Ascending aorta (tissue), 2 donors: ENCODE measurements at regions of chr5 and their contacts with region 1.

Region 1: DNA sequence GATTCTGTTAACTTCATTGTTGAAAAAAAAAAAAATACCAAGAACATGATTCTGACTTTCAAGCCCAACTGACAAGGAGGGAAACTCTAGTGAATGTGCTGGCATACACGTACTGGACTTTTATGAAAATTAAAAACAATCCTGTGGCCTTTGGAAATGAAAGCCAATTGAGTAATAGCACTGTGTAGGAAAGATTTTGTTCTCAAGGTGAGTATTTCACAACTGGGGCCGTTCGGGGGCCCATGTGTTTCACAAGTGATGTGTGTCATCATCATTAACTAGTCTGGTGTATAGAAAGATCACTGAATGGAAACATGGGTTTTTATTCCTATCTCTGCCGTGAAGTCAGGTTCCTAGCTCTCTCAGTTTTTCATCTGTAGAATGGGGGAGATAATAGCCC is 605.0 kb upstream of the CLINT1 start:
- DNase-seq: peak; percentile 17 to 82
- H3K4me3 ChIP-seq: no peak overlapping the region
- H3K27ac ChIP-seq: peak overlapping the region; percentile 4 to 47
- H3K4me1 ChIP-seq: peaks cover 0 to 15% of the 10 kb centered on the region in 2 donors
- H3K27me3 ChIP-seq: no peaks in the 10 kb centered on the region
- CTCF ChIP-seq: no peak

Region 2: DNA sequence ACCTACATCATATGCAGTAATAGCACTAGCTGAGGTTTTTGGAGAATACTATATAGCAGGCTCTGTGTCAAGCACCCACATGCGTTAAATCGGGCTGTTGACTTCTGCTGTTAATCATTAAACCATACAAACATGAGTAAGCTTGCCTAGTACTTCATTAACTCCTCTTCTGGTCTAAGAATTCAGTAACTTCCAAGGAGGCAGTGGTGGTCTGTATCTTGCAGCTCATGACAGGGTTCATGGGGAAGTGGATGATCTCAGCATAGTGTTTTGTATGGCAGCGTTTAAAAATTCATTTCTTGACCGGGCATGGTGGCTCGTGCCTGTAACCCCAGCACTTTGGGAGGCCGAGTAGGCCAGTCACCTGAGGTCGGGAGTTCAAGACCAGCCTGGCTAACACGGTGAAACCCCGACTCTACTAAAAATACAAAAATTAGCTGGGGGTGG is 1404.8 kb before region 1 on chr5 and contains the start of gene HAVCR1:
- intact Hi-C with region 1: no loop called
- DNase-seq: no peak
- H3K4me3 ChIP-seq: no peak within 1 kb of the TSS
- H3K27ac ChIP-seq: no peak within 1 kb of the TSS
- H3K4me1 ChIP-seq: no peaks in the 10 kb centered on the region
- H3K27me3 ChIP-seq: no peaks in the 10 kb centered on the region
- CTCF ChIP-seq: no peak
- total RNA-seq, gene HAVCR1: not detected

Region 3: GRCh38 chr5:158406884-158407823 is 56.8 kb before region 1 on chr5:
- intact Hi-C with region 1: loop called (anchors 5 kb)
- DNase-seq: no peak
- H3K4me3 ChIP-seq: no peak overlapping the region
- H3K27ac ChIP-seq: peak overlapping the region; percentile 27 to 58
- H3K4me1 ChIP-seq: peaks cover 0 to 13% of the 10 kb centered on the region in 2 donors
- H3K27me3 ChIP-seq: no peaks in the 10 kb centered on the region
- CTCF ChIP-seq: no peak

Region 4: GRCh38 chr5:158423623-158424200 is 40.2 kb before region 1 on chr5:
- intact Hi-C with region 1: no loop called
- DNase-seq: no peak
- H3K4me3 ChIP-seq: no peak overlapping the region
- H3K27ac ChIP-seq: no peak overlapping the region
- H3K4me1 ChIP-seq: no peaks in the 10 kb centered on the region
- H3K27me3 ChIP-seq: no peaks in the 10 kb centered on the region
- CTCF ChIP-seq: no peak

Region 5: DNA sequence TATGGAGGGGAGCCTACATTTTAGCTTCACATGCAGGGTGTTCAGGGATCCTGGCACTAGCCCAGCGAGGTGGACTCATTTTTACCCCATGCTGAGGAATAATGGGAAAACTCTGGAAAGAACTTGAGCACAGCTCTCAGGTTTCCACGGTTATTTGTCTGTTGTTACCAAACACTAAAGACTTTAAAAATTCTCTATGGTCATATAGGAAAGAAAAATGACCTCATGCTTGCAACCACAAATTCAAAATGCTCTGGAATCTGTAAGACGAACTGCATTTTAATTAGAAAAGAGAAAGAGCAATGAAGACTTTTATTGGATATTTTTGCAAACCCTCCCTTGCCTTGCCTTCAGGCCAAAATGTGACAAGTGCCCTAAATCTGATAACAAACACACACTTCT is 28.9 kb after region 1 on chr5:
- intact Hi-C with region 1: no loop called
- DNase-seq: no peak
- H3K4me3 ChIP-seq: no peak overlapping the region
- H3K27ac ChIP-seq: no peak overlapping the region
- H3K4me1 ChIP-seq: no peaks in the 10 kb centered on the region
- H3K27me3 ChIP-seq: no peaks in the 10 kb centered on the region
- CTCF ChIP-seq: no peak